MCF 10A (cell line): ENCODE measurements at regions of chr15 and their contacts with region 1.

Region 1: DNA sequence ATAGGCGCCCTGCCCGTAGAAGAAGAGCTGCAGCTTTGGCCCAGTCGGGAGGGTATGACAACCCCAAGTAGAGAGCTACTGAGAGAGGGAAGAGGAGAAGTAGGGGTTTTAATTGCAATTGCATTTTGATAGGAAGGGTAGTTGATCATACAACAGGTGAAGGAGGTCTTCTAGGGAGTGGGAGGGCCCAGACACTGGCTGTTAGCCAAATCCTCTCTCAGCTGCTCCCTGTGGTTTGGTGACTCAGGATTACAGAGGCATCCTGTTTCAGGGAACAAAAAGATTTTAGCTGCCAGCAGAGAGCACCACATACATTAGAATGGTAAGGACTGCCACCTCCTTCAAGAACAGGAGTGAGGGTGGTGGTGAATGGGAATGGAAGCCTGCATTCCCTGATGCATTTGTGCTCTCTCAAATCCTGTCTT is 408.9 kb upstream of the THBS1 start:
- DNase-seq: peak; percentile 97
- H3K4me3 Mint-ChIP-seq: no peak overlapping the region
- H3K27ac Mint-ChIP-seq: no peak overlapping the region
- H3K4me1 Mint-ChIP-seq: peaks cover 22% of the 10 kb centered on the region
- H3K27me3 Mint-ChIP-seq: no peaks in the 10 kb centered on the region
- CTCF ChIP-seq: peak; percentile 76

Region 2: GRCh38 chr15:38707802-38708671 is 463.9 kb before region 1 on chr15:
- CTCF ChIA-PET with region 1: interaction called, 7 read pairs
- POLR2A ChIA-PET with region 1: no interaction called
- intact Hi-C with region 1: loop called (anchors 1 kb)
- DNase-seq: peak; percentile 68
- H3K4me3 Mint-ChIP-seq: no peak overlapping the region
- H3K27ac Mint-ChIP-seq: no peak overlapping the region
- H3K4me1 Mint-ChIP-seq: no peaks in the 10 kb centered on the region
- H3K27me3 Mint-ChIP-seq: no peaks in the 10 kb centered on the region
- CTCF ChIP-seq: peak; percentile 76

Region 3: GRCh38 chr15:39195988-39196486 is 24.1 kb after region 1 on chr15:
- CTCF ChIA-PET with region 1: interaction called, 22 read pairs
- POLR2A ChIA-PET with region 1: interaction called, 37 read pairs
- intact Hi-C with region 1: no loop called
- DNase-seq: peak; percentile 99
- H3K4me3 Mint-ChIP-seq: no peak overlapping the region
- H3K27ac Mint-ChIP-seq: peak overlapping the region; percentile 88
- H3K4me1 Mint-ChIP-seq: peaks cover 61% of the 10 kb centered on the region
- H3K27me3 Mint-ChIP-seq: no peaks in the 10 kb centered on the region
- CTCF ChIP-seq: no peak

Region 4: GRCh38 chr15:39391230-39391629 is 219.3 kb after region 1 on chr15:
- CTCF ChIA-PET with region 1: interaction called, 7 read pairs
- POLR2A ChIA-PET with region 1: interaction called, 6 read pairs
- intact Hi-C with region 1: loop called (anchors 1 kb)
- DNase-seq: peak; percentile 100
- H3K4me3 Mint-ChIP-seq: no peak overlapping the region
- H3K27ac Mint-ChIP-seq: peak overlapping the region; percentile 12
- H3K4me1 Mint-ChIP-seq: peaks cover 27% of the 10 kb centered on the region
- H3K27me3 Mint-ChIP-seq: no peaks in the 10 kb centered on the region
- CTCF ChIP-seq: no peak

Region 5: GRCh38 chr15:39413558-39413957 is 241.6 kb after region 1 on chr15:
- CTCF ChIA-PET with region 1: no interaction called
- POLR2A ChIA-PET with region 1: no interaction called
- intact Hi-C with region 1: no loop called
- DNase-seq: no peak
- H3K4me3 Mint-ChIP-seq: no peak overlapping the region
- H3K27ac Mint-ChIP-seq: no peak overlapping the region
- H3K4me1 Mint-ChIP-seq: no peaks in the 10 kb centered on the region
- H3K27me3 Mint-ChIP-seq: no peaks in the 10 kb centered on the region
- CTCF ChIP-seq: no peak

Region 6: DNA sequence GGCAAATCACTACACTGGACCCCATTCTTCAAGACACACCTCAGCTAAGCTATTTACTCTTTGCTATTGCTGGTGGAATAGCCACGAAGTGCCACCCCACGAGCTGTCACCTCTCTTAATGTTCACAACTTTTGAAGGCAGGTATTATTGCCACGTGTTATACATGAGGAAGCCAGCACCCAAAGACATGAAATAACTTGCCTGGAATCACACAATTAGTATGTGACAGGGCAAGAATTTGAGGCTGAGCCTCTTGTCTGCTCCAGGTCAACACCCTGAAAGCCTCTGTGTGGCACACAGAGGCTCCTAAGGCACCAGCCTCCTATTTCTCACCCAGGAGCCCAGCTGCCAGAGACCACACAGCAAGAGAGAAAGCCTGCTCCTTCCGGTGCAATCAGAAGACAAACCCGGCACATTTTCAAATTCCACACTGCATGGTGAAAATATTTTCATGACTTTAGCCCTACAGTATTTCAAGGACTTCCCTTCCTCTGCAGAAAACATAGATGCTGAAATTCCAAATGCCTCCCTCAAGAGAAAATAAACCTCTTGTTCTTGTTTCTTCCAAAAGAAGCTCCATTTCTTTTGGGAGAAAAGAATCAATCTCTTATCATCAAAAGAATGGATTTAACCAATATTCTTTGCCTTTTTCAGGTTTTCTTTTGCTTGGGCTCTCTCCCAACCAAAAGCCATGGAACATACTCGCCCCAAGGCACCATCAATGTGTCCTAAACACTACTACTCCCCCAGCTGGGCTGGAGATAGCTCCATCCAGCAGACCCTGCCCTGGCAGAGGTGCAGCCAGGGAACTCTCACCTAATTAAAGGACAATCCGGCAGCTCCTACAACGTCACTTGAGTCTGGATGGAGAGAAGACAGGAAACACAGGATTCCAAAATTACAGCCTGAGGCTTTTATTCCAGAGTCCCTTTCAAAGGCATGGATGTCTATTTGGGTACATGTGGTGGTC is 324.2 kb after region 1 on chr15:
- CTCF ChIA-PET with region 1: interaction called, 5 read pairs
- POLR2A ChIA-PET with region 1: no interaction called
- intact Hi-C with region 1: loop called (anchors 5 kb)
- DNase-seq: no peak
- H3K4me3 Mint-ChIP-seq: no peak overlapping the region
- H3K27ac Mint-ChIP-seq: peak overlapping the region; percentile 54
- H3K4me1 Mint-ChIP-seq: peaks cover 18% of the 10 kb centered on the region
- H3K27me3 Mint-ChIP-seq: no peaks in the 10 kb centered on the region
- CTCF ChIP-seq: no peak

Region 7: GRCh38 chr15:39553947-39554693 is 382.2 kb after region 1 on chr15:
- CTCF ChIA-PET with region 1: interaction called, 5 read pairs
- POLR2A ChIA-PET with region 1: interaction called, 12 read pairs
- intact Hi-C with region 1: no loop called
- DNase-seq: peak; percentile 78
- H3K4me3 Mint-ChIP-seq: peak overlapping the region; percentile 22
- H3K27ac Mint-ChIP-seq: peak overlapping the region; percentile 50
- H3K4me1 Mint-ChIP-seq: peaks cover 39% of the 10 kb centered on the region
- H3K27me3 Mint-ChIP-seq: no peaks in the 10 kb centered on the region
- CTCF ChIP-seq: no peak

Region 8: GRCh38 chr15:39756806-39757522 is 585.0 kb after region 1 on chr15:
- CTCF ChIA-PET with region 1: interaction called, 26 read pairs
- POLR2A ChIA-PET with region 1: interaction called, 5 read pairs
- intact Hi-C with region 1: loop called (anchors 1 kb)
- DNase-seq: peak; percentile 61
- H3K4me3 Mint-ChIP-seq: no peak overlapping the region
- H3K27ac Mint-ChIP-seq: no peak overlapping the region
- H3K4me1 Mint-ChIP-seq: no peaks in the 10 kb centered on the region
- H3K27me3 Mint-ChIP-seq: no peaks in the 10 kb centered on the region
- CTCF ChIP-seq: peak; percentile 77